ENCODE measurements at regions of chr5 and their contacts with region 1.

Region 1: DNA sequence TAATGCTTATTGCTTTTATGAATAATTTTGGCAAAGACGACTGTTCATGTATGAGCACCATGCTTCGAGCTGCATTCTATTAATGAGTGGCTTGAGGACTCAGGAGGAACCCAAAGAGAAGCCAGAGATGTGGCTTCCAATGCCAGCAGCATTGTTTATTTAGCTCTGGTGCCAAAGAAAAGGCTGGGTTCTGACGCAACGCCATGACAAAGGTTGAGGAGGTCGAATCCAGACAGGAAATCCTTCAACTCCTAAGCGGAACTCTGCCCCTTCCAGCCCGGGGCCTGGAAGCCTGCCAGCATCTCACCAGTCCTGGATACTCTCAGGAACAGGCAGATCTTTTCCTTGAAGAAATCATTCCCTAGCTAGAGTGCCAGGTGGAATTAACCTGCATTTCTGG is 104.4 kb downstream of the ARHGAP26 start:
- DNase-seq: peak; percentile 93 to 94
- ATAC-seq: peak; percentile 68

Region 2: GRCh38 chr5:142201471-142201887 is 673.1 kb before region 1 on chr5:
- intact Hi-C with region 1: no loop called
- DNase-seq: no peak
- ATAC-seq: no peak

Region 3: GRCh38 chr5:142769741-142770631 is 104.6 kb before region 1 on chr5 and contains the start of gene ARHGAP26:
- intact Hi-C with region 1: loop called in 1 of 2 experiments (anchors 5 kb)
- DNase-seq: peak; percentile 97 to 98
- ATAC-seq: peak; percentile 88
- total RNA-seq, gene ARHGAP26: 71.6 to 85.1 TPM

Region 4: GRCh38 chr5:143051244-143052058 is 176.9 kb after region 1 on chr5:
- intact Hi-C with region 1: no loop called
- DNase-seq: no peak
- ATAC-seq: peak; percentile 30

Measured in left colon (tissue), 2 donors.